Motor neuron (in vitro differentiated cells): ENCODE measurements at regions of chr11 and their contacts with region 1.

Region 1: GRCh38 chr11:130124096-130124495 is 35.5 kb upstream of the ST14 start:
- ATAC-seq: peak; percentile 48 to 99 (median 94)
- H3K4me3 ChIP-seq: no peak overlapping the region
- H3K27ac ChIP-seq: no peak overlapping the region
- H3K4me1 ChIP-seq: no peaks in the 10 kb centered on the region

Region 2: DNA sequence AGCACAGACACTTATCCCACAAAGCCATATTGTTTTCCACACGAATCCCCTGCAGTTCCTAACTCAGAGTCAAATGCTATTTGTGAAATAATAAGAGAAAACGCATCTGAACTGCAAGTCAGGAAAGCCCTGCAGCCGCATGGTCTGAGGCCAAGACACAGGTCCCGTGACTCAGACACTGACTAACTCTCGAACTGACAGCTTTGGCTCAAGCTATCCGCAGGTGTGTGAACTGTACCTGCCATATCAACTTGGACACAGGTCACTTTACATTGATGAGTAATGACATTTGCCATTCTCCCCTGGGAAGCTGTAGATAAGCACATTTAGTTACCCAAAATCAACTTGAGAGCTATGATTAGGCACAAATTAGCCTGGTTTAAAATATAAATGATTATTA is 193.8 kb before region 1 on chr11:
- in situ Hi-C with region 1: loop called in 3 of 9 experiments (anchors 25 kb)
- ATAC-seq: no peak
- H3K4me3 ChIP-seq: no peak overlapping the region
- H3K27ac ChIP-seq: no peak overlapping the region
- H3K4me1 ChIP-seq: no peaks in the 10 kb centered on the region